Activated CD4-positive, alpha-beta memory T cell treated with anti-CD3 and anti-CD28 coated beads for 36 hours (primary cell): ENCODE measurements at regions of chr15 and their contacts with region 1.

Region 1: DNA sequence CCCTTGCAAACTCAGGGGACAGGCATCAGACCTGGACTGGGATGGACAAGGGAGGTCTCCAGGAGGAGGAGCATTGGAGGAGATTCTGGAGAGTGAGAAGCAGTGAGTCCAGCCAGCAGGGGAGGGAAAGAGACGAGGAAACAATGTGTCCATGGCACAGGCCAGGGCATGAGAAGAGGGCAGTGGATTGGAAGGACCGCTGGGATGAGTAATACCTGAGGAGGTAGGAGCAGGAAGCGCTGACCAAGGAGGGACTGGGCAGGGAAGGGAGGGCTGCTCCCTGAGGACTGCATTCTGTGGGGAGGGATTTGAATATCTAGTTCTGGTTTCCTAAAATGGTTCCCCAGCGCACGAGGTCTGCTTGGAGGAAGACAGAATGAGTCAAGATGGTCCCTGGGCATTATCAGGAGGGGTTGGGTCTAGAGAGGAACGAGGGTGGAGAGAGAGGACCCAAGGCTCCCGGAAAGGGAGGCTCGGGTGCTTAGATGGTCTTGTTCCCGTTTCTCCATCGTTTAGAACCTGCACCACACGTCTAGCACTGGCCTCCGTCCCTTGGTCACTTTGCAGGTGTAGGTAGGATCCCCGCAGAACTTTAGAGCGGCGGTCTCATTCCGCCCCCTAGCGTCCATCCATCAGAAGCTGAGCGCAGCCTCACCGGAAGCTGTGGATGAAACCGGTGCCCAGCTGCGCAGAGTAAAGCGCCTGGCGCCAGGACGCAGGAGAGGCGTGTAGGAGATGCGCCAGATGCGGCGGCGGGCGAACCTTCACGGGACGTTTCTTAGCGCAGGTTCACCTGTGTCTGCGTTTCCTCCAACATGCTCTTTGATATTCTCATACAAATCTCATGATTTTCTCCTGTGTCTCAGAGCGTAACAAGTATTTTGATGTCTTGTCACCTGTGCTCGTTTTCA is 190.7 kb upstream of the NDN start:
- DNase-seq: peak; percentile 55
- H3K4me3 Mint-ChIP-seq: no peak overlapping the region
- H3K27ac Mint-ChIP-seq: no peak overlapping the region
- H3K4me1 Mint-ChIP-seq: no peaks in the 10 kb centered on the region
- H3K27me3 Mint-ChIP-seq: no peaks in the 10 kb centered on the region

Region 2: DNA sequence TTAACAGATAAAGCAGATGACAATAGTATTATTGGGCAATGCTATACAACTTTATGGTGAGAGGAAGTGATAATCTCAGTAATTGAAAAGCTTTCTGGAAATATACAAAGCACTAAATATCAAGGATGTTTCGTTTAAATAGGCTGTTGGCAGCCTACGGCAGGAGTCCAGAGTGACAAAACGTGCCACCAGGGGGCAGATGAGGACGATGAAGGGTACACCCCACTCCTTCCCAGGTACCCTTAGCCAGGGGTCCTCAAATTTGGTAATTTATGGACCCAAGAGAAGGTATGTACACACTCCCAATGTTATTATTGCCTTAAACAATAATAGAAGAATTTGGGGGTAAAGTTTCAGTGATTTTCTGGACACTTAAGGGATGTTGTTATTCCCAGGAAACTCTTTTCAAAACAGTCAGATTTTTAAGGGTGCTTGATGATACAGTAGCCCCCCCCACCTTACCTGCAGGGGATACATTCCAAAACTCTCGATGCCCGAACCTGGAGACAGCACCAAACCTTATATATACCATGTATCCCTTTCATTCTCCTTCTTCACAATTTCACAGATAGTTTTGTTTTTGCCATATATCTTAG is 228.7 kb before region 1 on chr15:
- CTCF ChIA-PET with region 1: no interaction called
- POLR2A ChIA-PET with region 1: no interaction called
- intact Hi-C with region 1: loop called (anchors 2 kb)
- DNase-seq: peak; percentile 33
- H3K4me3 Mint-ChIP-seq: no peak overlapping the region
- H3K27ac Mint-ChIP-seq: no peak overlapping the region
- H3K4me1 Mint-ChIP-seq: no peaks in the 10 kb centered on the region
- H3K27me3 Mint-ChIP-seq: peaks cover 6% of the 10 kb centered on the region

Region 3: GRCh38 chr15:23828786-23829185 is 49.0 kb before region 1 on chr15:
- CTCF ChIA-PET with region 1: no interaction called
- POLR2A ChIA-PET with region 1: no interaction called
- intact Hi-C with region 1: no loop called
- DNase-seq: no peak
- H3K4me3 Mint-ChIP-seq: no peak overlapping the region
- H3K27ac Mint-ChIP-seq: no peak overlapping the region
- H3K4me1 Mint-ChIP-seq: no peaks in the 10 kb centered on the region
- H3K27me3 Mint-ChIP-seq: no peaks in the 10 kb centered on the region

Region 4: GRCh38 chr15:23924688-23925087 is 46.9 kb after region 1 on chr15:
- CTCF ChIA-PET with region 1: no interaction called
- POLR2A ChIA-PET with region 1: no interaction called
- intact Hi-C with region 1: no loop called
- DNase-seq: no peak
- H3K4me3 Mint-ChIP-seq: no peak overlapping the region
- H3K27ac Mint-ChIP-seq: no peak overlapping the region
- H3K4me1 Mint-ChIP-seq: no peaks in the 10 kb centered on the region
- H3K27me3 Mint-ChIP-seq: no peaks in the 10 kb centered on the region